Caco-2 (cell line): ENCODE measurements at regions of chr9 and their contacts with region 1.

Region 1: DNA sequence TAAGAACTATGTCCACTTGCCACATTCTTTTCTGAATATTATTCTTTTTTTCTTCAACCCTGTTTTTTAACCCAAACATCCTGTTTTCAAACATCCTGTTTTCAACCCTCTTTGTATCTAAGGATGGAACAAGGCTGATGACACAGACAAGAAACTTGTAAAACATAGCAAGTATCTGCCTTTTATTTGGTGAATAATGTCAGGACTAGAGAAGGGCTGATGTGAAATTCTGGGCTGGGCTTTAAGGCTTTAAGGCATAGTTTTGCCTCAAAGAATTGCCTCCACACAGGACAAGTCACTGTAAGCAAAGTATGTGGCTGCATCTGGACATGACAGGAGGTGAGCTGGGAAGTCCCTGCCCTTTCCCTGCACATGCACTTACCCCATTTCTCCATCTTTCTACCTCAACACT is 42.5 kb upstream of the RIC1 start:
- DNase-seq: no peak
- H3K4me3 ChIP-seq: no peak overlapping the region
- H3K4me3 Mint-ChIP-seq: no peak overlapping the region
- H3K27ac Mint-ChIP-seq: no peak overlapping the region
- H3K4me1 ChIP-seq: no peaks in the 10 kb centered on the region
- H3K4me1 Mint-ChIP-seq: no peaks in the 10 kb centered on the region
- H3K27me3 ChIP-seq: no peaks in the 10 kb centered on the region
- H3K27me3 Mint-ChIP-seq: no peaks in the 10 kb centered on the region
- CTCF ChIP-seq: no peak

Region 2: DNA sequence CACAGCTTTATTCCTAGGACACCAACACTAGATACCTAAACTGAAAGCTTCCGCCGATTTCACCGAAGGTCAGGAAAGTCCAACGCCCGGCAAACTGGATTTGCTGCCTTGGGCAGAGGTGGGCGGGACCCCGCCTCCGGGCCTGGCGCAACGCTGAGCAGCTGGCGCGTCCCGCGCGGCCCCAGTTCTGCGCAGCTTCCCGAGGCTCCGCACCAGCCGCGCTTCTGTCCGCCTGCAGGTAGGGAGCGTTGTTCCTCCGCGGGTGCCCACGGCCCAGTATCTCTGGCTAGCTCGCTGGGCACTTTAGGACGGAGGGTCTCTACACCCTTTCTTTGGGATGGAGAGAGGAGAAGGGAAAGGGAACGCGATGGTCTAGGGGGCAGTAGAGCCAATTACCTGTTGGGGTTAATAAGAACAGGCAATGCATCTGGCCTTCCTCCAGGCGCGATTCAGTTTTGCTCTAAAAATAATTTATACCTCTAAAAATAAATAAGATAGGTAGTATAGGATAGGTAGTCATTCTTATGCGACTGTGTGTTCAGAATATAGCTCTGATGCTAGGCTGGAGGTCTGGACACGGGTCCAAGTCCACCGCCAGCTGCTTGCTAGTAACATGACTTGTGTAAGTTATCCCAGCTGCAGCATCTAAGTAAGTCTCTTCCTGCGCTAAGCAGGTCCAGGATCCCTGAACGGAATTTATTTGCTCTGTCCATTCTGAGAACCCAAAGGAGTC is 135.9 kb before region 1 on chr9 and contains the start of gene CD274:
- CTCF ChIA-PET with region 1: interaction called, 7 read pairs
- POLR2A ChIA-PET with region 1: no interaction called
- intact Hi-C with region 1: loop called (anchors 2 kb)
- DNase-seq: peak; percentile 84 to 88
- H3K4me3 ChIP-seq: peak within 1 kb of the TSS; percentile 30
- H3K4me3 Mint-ChIP-seq: peak within 1 kb of the TSS; percentile 75
- H3K27ac Mint-ChIP-seq: no peak within 1 kb of the TSS
- H3K4me1 ChIP-seq: no peaks in the 10 kb centered on the region
- H3K4me1 Mint-ChIP-seq: peaks cover 7% of the 10 kb centered on the region
- H3K27me3 ChIP-seq: no peaks in the 10 kb centered on the region
- H3K27me3 Mint-ChIP-seq: peaks cover 3% of the 10 kb centered on the region
- CTCF ChIP-seq: peak; percentile 32 to 56
- total RNA-seq, gene CD274: 0.67 TPM in 1 of 2 replicates, not detected in the other